Dendritic cell treated with granulocyte-macrophage colony-stimulating factor and Interleukin-4, amounts not matched to agents 40 ng/mL and 50 ng/mL, for 4 days (primary cell): ENCODE measurements at regions of chr4 and their contacts with region 1.

Region 1: GRCh38 chr4:102403116-102403515 is 57.8 kb upstream of the SLC39A8 start:
- H3K4me3 Mint-ChIP-seq: no peak overlapping the region
- H3K27ac Mint-ChIP-seq: peak overlapping the region; percentile 60
- H3K4me1 Mint-ChIP-seq: peaks cover 51% of the 10 kb centered on the region
- H3K27me3 Mint-ChIP-seq: peaks cover 4% of the 10 kb centered on the region

Region 2: GRCh38 chr4:102143433-102143832 is 259.7 kb before region 1 on chr4:
- intact Hi-C with region 1: no loop called
- H3K4me3 Mint-ChIP-seq: no peak overlapping the region
- H3K27ac Mint-ChIP-seq: no peak overlapping the region
- H3K4me1 Mint-ChIP-seq: no peaks in the 10 kb centered on the region
- H3K27me3 Mint-ChIP-seq: no peaks in the 10 kb centered on the region

Region 3: DNA sequence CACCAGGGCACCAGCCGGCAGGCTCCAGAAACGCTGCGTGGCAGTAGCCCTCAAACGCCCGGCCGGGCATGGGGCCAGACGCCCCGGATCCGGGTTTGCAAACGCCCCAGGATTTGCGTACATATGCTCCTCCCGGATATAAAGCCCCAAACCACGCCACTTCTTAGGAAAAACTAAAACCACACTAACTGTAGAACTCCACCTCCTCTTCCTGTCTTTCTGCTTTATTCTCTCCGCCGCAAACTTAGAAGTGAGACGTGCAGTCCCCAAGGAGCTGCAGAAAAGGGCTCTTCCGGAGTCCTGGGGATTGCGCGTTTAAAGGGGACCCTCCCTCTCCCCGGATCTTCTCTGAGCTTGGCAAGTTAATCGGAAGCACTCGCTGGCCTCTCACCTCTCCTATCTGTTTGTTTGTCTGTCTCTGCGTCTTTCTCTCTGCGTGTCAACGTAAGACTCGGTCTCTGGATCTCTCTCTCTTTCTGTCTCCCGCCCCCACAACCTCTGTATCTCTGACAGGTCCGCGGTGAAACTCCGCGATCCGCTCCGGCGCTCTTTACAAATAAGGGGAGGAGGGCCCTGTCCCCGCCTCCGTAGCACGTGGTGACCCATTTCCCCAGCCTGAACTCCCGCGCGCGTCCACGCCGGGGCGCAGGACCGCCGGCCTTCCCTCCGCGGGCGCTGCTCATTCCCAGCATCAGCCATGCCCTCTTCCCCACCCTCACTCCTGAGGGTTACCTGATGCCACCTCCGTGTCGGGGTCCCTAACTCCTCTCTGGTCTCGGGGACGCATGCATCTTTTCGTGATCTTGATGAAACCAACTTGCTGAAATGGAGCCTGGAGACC is 57.9 kb before region 1 on chr4 and contains the start of gene SLC39A8:
- intact Hi-C with region 1: loop called (anchors 2 kb)
- H3K4me3 Mint-ChIP-seq: peak within 1 kb of the TSS; percentile 93
- H3K27ac Mint-ChIP-seq: peak within 1 kb of the TSS; percentile 97
- H3K4me1 Mint-ChIP-seq: peaks cover 27% of the 10 kb centered on the region
- H3K27me3 Mint-ChIP-seq: no peaks in the 10 kb centered on the region

Region 4: DNA sequence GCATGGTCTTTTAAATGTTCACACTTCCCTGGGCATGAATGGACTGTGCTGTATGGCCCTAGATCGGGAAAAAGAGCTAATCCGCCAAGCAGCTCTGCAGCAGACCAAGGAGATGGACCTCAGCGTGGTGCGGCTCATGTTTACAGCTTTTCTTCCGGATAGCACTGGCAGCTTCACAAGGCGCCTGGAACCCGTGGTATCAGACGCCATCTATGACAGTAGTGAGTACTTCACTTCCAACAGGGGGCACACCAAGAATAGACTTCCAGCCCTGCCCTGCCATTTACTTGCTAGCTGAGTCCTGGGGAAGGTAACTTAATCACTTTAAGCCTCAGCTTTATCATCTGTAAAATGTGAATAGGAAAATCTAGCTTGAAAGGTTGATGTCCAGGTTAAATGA is 175.7 kb after region 1 on chr4:
- intact Hi-C with region 1: no loop called
- H3K4me3 Mint-ChIP-seq: no peak overlapping the region
- H3K27ac Mint-ChIP-seq: no peak overlapping the region
- H3K4me1 Mint-ChIP-seq: peaks cover 11% of the 10 kb centered on the region
- H3K27me3 Mint-ChIP-seq: no peaks in the 10 kb centered on the region